ENCODE measurements at regions of chr4 and their contacts with region 1.

Region 1: GRCh38 chr4:2186133-2186864 is 55.6 kb downstream of the HAUS3 start:
- DNase-seq: peak; percentile 70
- H3K4me3 Mint-ChIP-seq: no peak overlapping the region
- H3K27ac Mint-ChIP-seq: no peak overlapping the region
- H3K4me1 Mint-ChIP-seq: no peaks in the 10 kb centered on the region
- H3K27me3 Mint-ChIP-seq: no peaks in the 10 kb centered on the region
- CTCF ChIP-seq: peak; percentile 81

Region 2: DNA sequence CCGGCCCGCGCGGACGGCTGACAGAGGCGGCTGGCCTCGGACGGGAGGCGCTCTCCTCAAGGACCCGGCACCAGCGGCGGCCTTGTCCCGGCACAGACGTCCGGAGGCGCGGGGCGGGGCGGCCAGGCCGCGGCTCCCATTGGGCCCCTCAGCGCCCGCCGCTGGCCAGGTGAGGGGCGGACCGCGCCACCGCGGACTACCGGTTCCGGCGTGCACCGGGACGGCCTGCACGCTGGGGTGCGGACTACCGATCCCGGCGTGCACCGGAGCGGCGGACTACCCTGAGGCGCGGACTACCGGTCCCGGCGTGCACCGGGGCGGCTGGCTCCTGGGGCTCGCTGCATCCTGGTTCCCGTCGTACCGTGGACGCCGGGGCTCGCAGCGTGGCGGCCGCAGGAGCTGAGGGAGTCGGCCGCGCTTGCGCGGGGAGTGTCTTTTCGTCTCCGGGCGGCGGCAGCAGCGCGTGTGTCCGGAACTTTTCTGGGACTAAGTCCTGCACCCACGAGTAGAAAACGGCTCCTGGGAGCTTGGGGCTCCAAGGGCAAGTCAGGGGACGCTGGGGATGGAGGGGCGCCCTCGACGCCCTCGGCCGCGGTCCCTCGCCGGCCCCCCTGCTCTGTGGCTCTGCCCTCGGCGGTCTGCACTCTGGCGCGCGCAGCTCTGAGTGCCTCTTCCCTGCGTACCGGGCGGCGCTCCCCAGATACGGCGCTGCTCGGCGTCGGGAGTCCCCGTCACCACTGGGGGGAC is 330.1 kb before region 1 on chr4 and contains the start of gene LETM1:
- CTCF ChIA-PET with region 1: no interaction called
- POLR2A ChIA-PET with region 1: no interaction called
- intact Hi-C with region 1: loop called (anchors 1 kb)
- DNase-seq: peak; percentile 93
- H3K4me3 Mint-ChIP-seq: peak within 1 kb of the TSS; percentile 83
- H3K27ac Mint-ChIP-seq: peak within 1 kb of the TSS; percentile 79
- H3K4me1 Mint-ChIP-seq: peaks cover 26% of the 10 kb centered on the region
- H3K27me3 Mint-ChIP-seq: no peaks in the 10 kb centered on the region
- CTCF ChIP-seq: peak; percentile 8
- total RNA-seq, gene LETM1: 85.0 and 86.3 TPM in 2 replicates

Region 3: GRCh38 chr4:2008875-2009703 is 177.2 kb before region 1 on chr4 and contains the start of gene NELFA:
- CTCF ChIA-PET with region 1: interaction called, 5 read pairs
- POLR2A ChIA-PET with region 1: no interaction called
- intact Hi-C with region 1: loop called (anchors 1 kb)
- DNase-seq: peak; percentile 96
- H3K4me3 Mint-ChIP-seq: peak within 1 kb of the TSS; percentile 80
- H3K27ac Mint-ChIP-seq: peak within 1 kb of the TSS; percentile 90
- H3K4me1 Mint-ChIP-seq: peaks cover 18% of the 10 kb centered on the region
- H3K27me3 Mint-ChIP-seq: no peaks in the 10 kb centered on the region
- CTCF ChIP-seq: no peak
- total RNA-seq, gene NELFA: 30.1 and 36.2 TPM in 2 replicates

Region 4: DNA sequence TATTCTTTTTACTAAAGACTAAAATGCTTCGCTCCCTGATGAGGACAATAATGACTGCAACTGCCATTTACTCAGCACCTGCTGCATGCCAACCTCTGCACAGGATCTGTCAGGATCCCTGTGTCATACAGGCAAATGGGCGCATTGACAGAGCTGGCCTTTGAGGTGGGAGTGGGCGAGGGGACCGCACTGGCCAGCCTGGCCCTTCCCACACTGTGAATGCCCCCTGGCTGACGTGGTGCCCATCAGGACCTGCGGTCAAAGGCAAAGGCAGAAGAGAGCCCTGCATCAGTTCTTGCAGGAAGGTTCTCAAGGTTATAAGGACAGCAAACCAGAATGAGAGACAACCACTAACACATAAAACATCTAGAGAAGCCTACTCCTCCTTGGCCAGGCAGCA is 12.2 kb before region 1 on chr4:
- CTCF ChIA-PET with region 1: no interaction called
- POLR2A ChIA-PET with region 1: no interaction called
- intact Hi-C with region 1: no loop called
- DNase-seq: no peak
- H3K4me3 Mint-ChIP-seq: no peak overlapping the region
- H3K27ac Mint-ChIP-seq: no peak overlapping the region
- H3K4me1 Mint-ChIP-seq: no peaks in the 10 kb centered on the region
- H3K27me3 Mint-ChIP-seq: no peaks in the 10 kb centered on the region
- CTCF ChIP-seq: no peak

Region 5: GRCh38 chr4:2526559-2526958 is 340.3 kb after region 1 on chr4:
- CTCF ChIA-PET with region 1: no interaction called
- POLR2A ChIA-PET with region 1: no interaction called
- intact Hi-C with region 1: no loop called
- DNase-seq: no peak
- H3K4me3 Mint-ChIP-seq: no peak overlapping the region
- H3K27ac Mint-ChIP-seq: no peak overlapping the region
- H3K4me1 Mint-ChIP-seq: no peaks in the 10 kb centered on the region
- H3K27me3 Mint-ChIP-seq: no peaks in the 10 kb centered on the region
- CTCF ChIP-seq: peak; percentile 9